Common myeloid progenitor, CD34-positive (primary cell): ENCODE measurements at regions of chr1 and their contacts with region 1.

Region 1: DNA sequence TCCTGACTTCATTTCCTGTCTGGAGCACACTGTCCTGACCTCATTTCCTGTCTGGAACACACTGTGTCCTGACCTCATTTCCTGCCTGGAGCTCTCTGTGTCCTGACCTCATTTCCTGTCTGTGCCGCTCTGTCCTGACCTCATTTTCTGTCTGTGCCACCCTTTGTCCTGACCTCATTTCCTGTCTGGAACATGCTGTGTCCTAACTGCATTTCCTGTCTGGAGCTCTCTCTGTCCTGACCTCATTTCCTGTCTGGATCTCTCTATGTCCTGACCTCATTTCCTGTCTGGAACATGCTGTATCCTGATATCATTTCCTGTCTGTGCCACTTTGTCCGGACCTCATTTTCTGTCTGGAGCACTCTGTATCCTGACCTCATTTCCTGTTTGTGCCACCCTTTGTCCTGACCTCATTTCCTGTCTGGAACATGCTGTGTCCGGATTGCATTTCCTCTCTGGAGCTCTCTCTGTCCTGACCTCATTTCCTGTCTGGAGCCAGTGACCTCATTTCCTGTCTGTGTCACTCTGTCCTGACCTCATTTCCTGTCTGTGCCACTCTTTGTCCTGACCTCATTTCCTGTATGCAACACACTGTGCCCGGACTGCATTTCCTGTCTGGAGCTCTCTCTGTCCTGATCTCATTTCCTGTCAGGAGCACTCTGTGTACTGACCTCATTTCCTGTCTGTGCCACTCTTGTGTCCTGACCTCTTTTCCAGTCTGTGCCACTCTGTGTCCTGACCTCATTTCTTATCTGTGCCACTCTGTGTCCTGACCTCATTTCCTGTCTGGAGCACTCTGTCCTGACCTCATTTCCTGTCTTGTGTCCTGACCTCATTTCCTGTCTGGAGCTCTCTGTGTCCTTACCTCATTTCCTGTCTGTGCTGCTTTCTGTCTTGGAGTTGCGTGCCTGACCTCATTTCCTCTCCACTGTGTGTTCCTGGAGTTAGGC is 27.6 kb downstream of the SKI start:
- DNase-seq: peak; percentile 97 to 99 (median 98)
- H3K4me3 ChIP-seq: no peak overlapping the region
- H3K27ac ChIP-seq: peak overlapping the region; percentile 71 to 84
- H3K4me1 ChIP-seq: peaks cover 0 to 32% (median 19%) of the 10 kb centered on the region in 4 experiments
- H3K27me3 ChIP-seq: no peaks in the 10 kb centered on the region

Region 2: DNA sequence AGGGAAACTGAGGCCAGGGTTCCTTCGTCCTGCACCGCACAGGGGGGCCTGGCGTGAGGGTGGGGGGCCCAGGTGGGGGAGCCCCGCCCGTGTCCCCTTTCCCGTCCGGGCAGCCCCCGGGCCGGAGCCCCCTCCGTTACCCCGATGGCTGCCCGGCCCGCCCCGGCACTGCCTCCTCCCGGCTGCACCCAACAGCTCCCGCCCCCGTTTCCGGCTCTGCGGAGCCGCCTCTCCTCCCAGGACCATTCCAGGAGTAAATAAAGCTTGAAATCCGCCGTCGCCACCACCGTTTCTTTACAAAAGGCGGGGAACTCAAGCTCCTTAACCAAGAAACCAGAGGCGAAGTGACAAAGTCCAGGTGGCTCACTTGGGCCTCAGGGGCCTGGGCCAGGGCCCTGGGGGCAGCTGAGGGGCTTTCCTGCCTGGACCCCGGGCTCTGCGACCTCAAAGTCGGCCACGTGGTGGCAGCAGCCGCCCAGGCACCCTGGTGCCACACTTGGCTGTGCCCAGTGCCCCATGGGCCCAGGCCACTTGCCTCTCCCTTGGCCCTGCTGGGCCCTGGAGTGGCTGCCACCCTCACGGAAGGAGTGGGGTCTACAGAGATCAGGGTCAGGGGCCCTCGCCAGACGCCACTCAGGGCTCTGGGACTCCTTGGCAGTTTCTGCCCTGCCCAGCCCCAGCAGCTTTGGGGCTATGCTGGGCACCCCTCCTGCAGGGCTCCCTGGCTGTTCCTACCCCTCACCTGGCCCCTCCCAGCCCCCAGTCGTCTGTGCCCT is 60.6 kb before region 1 on chr1:
- CTCF ChIA-PET with region 1: interaction called, 6 read pairs
- POLR2A ChIA-PET with region 1: interaction called, 15 read pairs
- DNase-seq: peak; percentile 78 to 88 (median 88)
- H3K4me3 ChIP-seq: peak overlapping the region; percentile 28 to 83 (median 67)
- H3K27ac ChIP-seq: peak overlapping the region; percentile 58 to 86
- H3K4me1 ChIP-seq: peaks cover 0 to 37% (median 35%) of the 10 kb centered on the region in 4 experiments
- H3K27me3 ChIP-seq: no peaks in the 10 kb centered on the region

Region 3: GRCh38 chr1:2233997-2234761 is 21.5 kb before region 1 on chr1:
- CTCF ChIA-PET with region 1: interaction called, 13 read pairs
- POLR2A ChIA-PET with region 1: interaction called, 150 read pairs
- DNase-seq: peak; percentile 57 to 86 (median 81)
- H3K4me3 ChIP-seq: peak overlapping the region in 5 of 7 experiments; percentile 8 to 60 (median 36)
- H3K27ac ChIP-seq: peak overlapping the region; percentile 40 to 71
- H3K4me1 ChIP-seq: peaks cover 6 to 95% (median 83%) of the 10 kb centered on the region in 4 experiments
- H3K27me3 ChIP-seq: no peaks in the 10 kb centered on the region

Region 4: DNA sequence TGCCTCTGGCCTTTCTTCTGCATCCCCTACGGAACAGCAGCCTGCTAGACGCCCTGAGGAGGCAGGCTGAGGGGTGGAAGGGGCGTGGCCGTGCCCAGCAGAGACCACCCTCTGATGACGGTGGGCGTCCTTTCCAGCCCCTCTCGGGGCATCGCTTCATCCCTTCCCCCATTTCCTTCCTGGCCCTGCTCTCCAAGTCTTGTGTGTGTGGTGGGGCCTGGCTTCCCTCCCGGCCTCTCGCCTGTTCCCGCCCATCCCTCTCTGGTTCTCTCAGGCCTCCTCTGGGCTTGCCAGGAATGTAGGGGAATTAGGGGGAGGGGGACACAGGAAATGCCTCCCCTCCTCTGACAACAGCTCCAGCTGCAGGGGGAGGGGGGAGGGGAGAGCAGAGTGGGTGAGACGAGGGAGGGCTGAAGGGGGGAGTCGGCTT is 23.5 kb after region 1 on chr1:
- CTCF ChIA-PET with region 1: interaction called, 10 read pairs
- POLR2A ChIA-PET with region 1: interaction called, 20 read pairs
- DNase-seq: peak; percentile 82 to 93 (median 92)
- H3K4me3 ChIP-seq: peak overlapping the region in 6 of 7 experiments; percentile 3 to 62 (median 29)
- H3K27ac ChIP-seq: peak overlapping the region; percentile 25 to 54
- H3K4me1 ChIP-seq: peaks cover 0 to 57% (median 53%) of the 10 kb centered on the region in 4 experiments
- H3K27me3 ChIP-seq: no peaks in the 10 kb centered on the region

Region 5: DNA sequence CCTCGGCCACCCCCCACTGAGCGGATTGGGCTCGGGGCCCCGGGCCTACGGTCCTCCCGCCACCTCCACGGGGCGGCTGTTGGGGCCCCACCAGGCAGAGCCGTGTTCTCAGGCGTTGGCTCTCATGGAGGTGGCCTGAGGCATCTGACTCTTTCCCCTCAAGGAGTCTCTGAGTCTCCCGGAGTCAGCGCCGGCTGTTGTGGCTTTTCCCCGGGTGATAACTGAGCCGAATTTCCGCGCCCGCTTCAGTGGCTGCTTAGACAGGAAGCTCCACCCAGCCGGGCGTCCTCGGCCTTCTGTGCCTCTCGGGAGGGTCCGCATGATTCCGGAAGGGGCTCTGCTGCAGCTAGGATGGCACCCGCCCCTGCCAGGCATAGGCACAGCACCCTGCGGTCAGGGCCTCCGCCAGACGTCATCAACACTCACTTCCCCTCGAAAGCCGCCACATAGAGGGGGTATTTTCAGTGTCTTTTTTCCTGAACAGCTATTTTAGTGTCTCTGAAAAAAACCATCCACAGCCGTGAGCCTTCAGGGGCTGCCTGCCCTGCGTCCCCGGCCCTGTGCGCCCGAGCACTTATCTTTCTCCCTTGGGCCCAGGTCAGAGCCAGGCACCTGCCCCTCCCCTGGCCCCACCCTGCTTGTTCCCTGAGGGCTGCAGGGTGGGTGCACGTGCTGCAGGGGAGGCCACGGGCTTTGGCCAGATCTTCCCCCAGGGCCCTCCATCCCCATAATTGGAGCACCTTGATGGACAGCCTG is 45.3 kb after region 1 on chr1:
- CTCF ChIA-PET with region 1: interaction called, 10 read pairs
- POLR2A ChIA-PET with region 1: interaction called, 102 read pairs
- DNase-seq: peak; percentile 99 to 100 (median 100)
- H3K4me3 ChIP-seq: peak overlapping the region in 6 of 7 experiments; percentile 19 to 68 (median 59)
- H3K27ac ChIP-seq: peak overlapping the region; percentile 93 to 95
- H3K4me1 ChIP-seq: peaks cover 0 to 82% (median 56%) of the 10 kb centered on the region in 4 experiments
- H3K27me3 ChIP-seq: no peaks in the 10 kb centered on the region

Region 6: GRCh38 chr1:2322065-2322571 is 66.4 kb after region 1 on chr1:
- CTCF ChIA-PET with region 1: interaction called, 5 read pairs
- POLR2A ChIA-PET with region 1: interaction called, 39 read pairs
- DNase-seq: peak; percentile 50 to 67 (median 65)
- H3K4me3 ChIP-seq: peak overlapping the region in 3 of 7 experiments; percentile 36 to 49 (median 40)
- H3K27ac ChIP-seq: peak overlapping the region in 1 of 2 experiments; percentile 58
- H3K4me1 ChIP-seq: peaks cover 0 to 23% (median 9%) of the 10 kb centered on the region in 4 experiments
- H3K27me3 ChIP-seq: peaks cover 0 to 6% (median 0%) of the 10 kb centered on the region in 5 experiments

Region 7: GRCh38 chr1:2335721-2336455 is 80.2 kb after region 1 on chr1:
- CTCF ChIA-PET with region 1: no interaction called
- POLR2A ChIA-PET with region 1: no interaction called
- DNase-seq: no peak
- H3K4me3 ChIP-seq: no peak overlapping the region
- H3K27ac ChIP-seq: no peak overlapping the region
- H3K4me1 ChIP-seq: no peaks in the 10 kb centered on the region
- H3K27me3 ChIP-seq: peaks cover 0 to 1% (median 0%) of the 10 kb centered on the region in 5 experiments

Region 8: DNA sequence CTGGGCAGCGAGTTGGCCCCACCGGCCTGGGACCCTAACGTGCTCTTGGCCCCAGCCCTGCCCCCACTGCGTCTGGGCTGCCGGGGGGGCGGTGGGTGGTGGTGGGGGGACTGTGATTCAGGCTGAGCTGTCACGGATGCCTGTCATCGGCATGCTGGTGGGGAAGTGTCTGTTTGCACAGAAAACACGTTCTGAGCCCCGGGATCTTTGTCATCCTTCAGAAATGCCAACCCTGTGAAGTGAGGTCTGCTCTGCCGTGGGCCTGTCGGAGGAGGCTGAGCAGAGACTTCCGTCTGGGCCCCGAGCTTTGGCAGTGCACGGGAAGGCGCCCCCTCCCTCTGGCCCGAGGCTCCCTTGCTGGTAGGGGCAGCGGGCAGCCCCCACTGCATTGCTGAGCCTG is 196.0 kb after region 1 on chr1:
- CTCF ChIA-PET with region 1: no interaction called
- POLR2A ChIA-PET with region 1: no interaction called
- DNase-seq: peak in 1 of 3 donors; percentile 26
- H3K4me3 ChIP-seq: no peak overlapping the region
- H3K27ac ChIP-seq: no peak overlapping the region
- H3K4me1 ChIP-seq: no peaks in the 10 kb centered on the region
- H3K27me3 ChIP-seq: peaks cover 0 to 52% (median 0%) of the 10 kb centered on the region in 5 experiments